Endothelial cell of umbilical vein (primary cell): ENCODE measurements at regions of chr15 and their contacts with region 1.

Region 1: DNA sequence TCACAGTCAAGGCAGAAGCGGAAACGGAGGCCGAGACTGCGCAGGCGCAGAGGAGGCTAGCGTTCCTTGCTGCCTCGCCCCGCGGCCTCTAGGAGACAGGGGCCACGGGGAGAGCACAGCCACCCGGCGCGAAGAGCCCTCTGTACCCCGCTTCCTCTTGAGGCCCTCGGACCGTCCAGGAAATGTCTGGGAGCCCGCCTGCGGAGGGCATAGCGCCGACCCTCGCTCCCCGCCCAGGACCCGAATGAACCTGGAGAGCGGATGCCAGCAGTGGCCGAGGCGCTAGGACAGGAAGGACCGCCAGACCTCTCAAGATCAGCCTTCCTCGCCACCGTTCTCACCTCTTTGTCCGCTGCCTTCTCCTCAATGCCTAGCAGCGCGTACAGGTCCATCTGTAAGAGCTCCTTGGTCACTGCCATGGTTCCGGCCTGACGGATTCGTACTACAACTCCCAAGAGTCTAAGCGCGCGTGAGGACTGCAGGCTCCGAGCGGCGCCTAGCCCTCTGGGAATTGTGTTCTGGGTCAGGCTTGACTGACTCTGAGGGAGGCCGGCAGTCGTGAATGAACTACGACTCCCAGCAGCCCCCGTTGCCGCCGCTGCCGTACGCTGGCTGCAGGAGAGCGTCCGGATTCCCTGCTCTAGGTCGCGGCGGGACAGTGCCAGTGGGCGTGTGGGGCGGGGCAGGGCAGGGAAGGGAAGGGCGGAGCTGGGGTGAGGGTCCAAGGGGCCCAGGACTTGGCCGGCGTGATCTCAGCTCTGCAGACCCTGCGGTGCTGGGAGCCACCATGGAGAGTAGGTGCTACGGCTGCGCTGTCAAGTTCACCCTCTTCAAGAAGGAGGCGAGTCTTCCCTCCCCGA is at the starts of genes DNAJC17 and ZFYVE19:
- DNase-seq: peak; percentile 98
- H3K4me3 ChIP-seq: peak within 1 kb of the TSS; percentile 64 to 67 (median 64)
- H3K27ac ChIP-seq: peak within 1 kb of the TSS; percentile 27
- H3K4me1 ChIP-seq: peaks cover 14% of the 10 kb centered on the region
- H3K27me3 ChIP-seq: no peaks in the 10 kb centered on the region
- CTCF ChIP-seq: peak in 1 of 2 donors; percentile 3
- POLR2A ChIP-seq: peak; percentile 85
- total RNA-seq, gene DNAJC17: 42.6 and 46.4 TPM in 2 replicates
- total RNA-seq, gene ZFYVE19: 24.8 and 29.7 TPM in 2 replicates

Region 2: DNA sequence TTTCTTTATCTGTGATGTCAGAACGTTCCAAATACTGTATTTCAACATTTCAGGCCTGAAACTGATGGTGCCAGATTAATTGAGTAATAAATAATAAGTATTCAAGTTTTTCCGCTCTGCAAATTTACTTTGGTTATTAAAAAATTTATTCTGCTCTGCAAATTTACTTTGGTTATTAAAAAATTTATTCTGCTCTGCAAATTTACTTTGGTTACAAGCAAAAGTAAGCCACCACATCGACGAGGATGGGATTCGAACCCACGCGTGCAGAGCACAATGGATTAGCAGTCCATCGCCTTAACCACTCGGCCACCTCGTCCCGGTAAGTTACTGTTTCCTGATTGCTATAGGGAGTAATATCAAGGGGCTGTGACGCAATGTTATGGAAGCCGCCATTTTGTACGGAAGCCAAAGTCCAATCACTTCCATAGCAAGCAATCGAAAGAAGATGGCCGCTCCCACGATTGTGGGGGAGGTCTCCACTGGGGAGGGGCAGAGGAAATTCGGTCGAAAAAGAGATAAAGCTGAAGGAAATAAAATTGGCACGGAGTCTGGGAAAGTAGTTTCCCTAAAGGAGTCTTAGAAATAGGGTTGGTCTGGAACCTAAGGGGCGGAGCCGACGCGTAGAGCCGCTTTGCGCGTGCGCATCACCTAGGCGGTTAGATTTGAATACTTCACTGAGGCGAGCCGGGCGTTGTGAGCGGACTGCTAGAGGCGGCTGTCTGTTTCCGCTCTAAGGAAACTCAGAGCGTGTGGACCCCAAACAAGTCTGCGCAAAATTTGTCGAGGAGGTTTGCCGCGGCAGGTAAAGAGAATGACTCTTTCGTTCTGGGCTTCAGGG is 213.4 kb before region 1 on chr15 and contains the start of gene KNL1:
- CTCF ChIA-PET with region 1: no interaction called
- POLR2A ChIA-PET with region 1: interaction called, 4 read pairs
- dilution Hi-C with region 1: no loop called
- intact Hi-C with region 1: loop called (anchors 10 kb)
- DNase-seq: peak; percentile 100
- H3K4me3 ChIP-seq: peak within 1 kb of the TSS; percentile 52 to 99 (median 99)
- H3K27ac ChIP-seq: peak within 1 kb of the TSS; percentile 99
- H3K4me1 ChIP-seq: peaks cover 8% of the 10 kb centered on the region
- H3K27me3 ChIP-seq: peaks cover under 1 to 3% of the 10 kb centered on the region in 2 experiments
- CTCF ChIP-seq: no peak
- POLR2A ChIP-seq: peak; percentile 83
- total RNA-seq, gene KNL1: 31.8 and 33.8 TPM in 2 replicates

Region 3: GRCh38 chr15:40694688-40695468 is 112.4 kb before region 1 on chr15 and contains the start of gene RAD51:
- CTCF ChIA-PET with region 1: no interaction called
- POLR2A ChIA-PET with region 1: interaction called, 5 read pairs
- dilution Hi-C with region 1: no loop called
- intact Hi-C with region 1: loop called (anchors 1 kb)
- DNase-seq: peak; percentile 95
- H3K4me3 ChIP-seq: peak within 1 kb of the TSS; percentile 69 to 96 (median 92)
- H3K27ac ChIP-seq: peak within 1 kb of the TSS; percentile 86
- H3K4me1 ChIP-seq: peaks cover 13% of the 10 kb centered on the region
- H3K27me3 ChIP-seq: no peaks in the 10 kb centered on the region
- CTCF ChIP-seq: no peak
- POLR2A ChIP-seq: peak; percentile 63
- total RNA-seq, gene RAD51: 29.7 and 30.9 TPM in 2 replicates

Region 4: GRCh38 chr15:40754883-40755811 is 52.1 kb before region 1 on chr15 and contains the start of gene RMDN3:
- CTCF ChIA-PET with region 1: no interaction called
- POLR2A ChIA-PET with region 1: no interaction called
- dilution Hi-C with region 1: no loop called
- intact Hi-C with region 1: loop called (anchors 1 kb)
- DNase-seq: peak; percentile 94
- H3K4me3 ChIP-seq: peak within 1 kb of the TSS; percentile 70 to 82 (median 71)
- H3K27ac ChIP-seq: peak within 1 kb of the TSS; percentile 71
- H3K4me1 ChIP-seq: peaks cover 8% of the 10 kb centered on the region
- H3K27me3 ChIP-seq: no peaks in the 10 kb centered on the region
- CTCF ChIP-seq: no peak
- POLR2A ChIP-seq: peak; percentile 81
- total RNA-seq, gene RMDN3: 35.9 and 37.2 TPM in 2 replicates

Region 5: GRCh38 chr15:40769274-40770146 is 37.7 kb before region 1 on chr15 and contains the start of gene C15orf62:
- CTCF ChIA-PET with region 1: interaction called, 3 read pairs
- POLR2A ChIA-PET with region 1: no interaction called
- dilution Hi-C with region 1: no loop called
- intact Hi-C with region 1: loop called (anchors 1 kb)
- DNase-seq: peak; percentile 65
- H3K4me3 ChIP-seq: no peak within 1 kb of the TSS
- H3K27ac ChIP-seq: peak within 1 kb of the TSS; percentile 46
- H3K4me1 ChIP-seq: peaks cover 29% of the 10 kb centered on the region
- H3K27me3 ChIP-seq: no peaks in the 10 kb centered on the region
- CTCF ChIP-seq: no peak
- POLR2A ChIP-seq: no peak
- total RNA-seq, gene C15orf62: 0.38 and 0.44 TPM in 2 replicates

Region 6: GRCh38 chr15:40793216-40793989 is 13.9 kb before region 1 on chr15:
- CTCF ChIA-PET with region 1: interaction called, 5 read pairs
- POLR2A ChIA-PET with region 1: no interaction called
- dilution Hi-C with region 1: no loop called
- intact Hi-C with region 1: loop called (anchors 1 kb)
- DNase-seq: peak; percentile 99
- H3K4me3 ChIP-seq: no peak overlapping the region
- H3K27ac ChIP-seq: peak overlapping the region; percentile 58
- H3K4me1 ChIP-seq: peaks cover 48% of the 10 kb centered on the region
- H3K27me3 ChIP-seq: no peaks in the 10 kb centered on the region
- CTCF ChIP-seq: no peak
- POLR2A ChIP-seq: no peak

Region 7: DNA sequence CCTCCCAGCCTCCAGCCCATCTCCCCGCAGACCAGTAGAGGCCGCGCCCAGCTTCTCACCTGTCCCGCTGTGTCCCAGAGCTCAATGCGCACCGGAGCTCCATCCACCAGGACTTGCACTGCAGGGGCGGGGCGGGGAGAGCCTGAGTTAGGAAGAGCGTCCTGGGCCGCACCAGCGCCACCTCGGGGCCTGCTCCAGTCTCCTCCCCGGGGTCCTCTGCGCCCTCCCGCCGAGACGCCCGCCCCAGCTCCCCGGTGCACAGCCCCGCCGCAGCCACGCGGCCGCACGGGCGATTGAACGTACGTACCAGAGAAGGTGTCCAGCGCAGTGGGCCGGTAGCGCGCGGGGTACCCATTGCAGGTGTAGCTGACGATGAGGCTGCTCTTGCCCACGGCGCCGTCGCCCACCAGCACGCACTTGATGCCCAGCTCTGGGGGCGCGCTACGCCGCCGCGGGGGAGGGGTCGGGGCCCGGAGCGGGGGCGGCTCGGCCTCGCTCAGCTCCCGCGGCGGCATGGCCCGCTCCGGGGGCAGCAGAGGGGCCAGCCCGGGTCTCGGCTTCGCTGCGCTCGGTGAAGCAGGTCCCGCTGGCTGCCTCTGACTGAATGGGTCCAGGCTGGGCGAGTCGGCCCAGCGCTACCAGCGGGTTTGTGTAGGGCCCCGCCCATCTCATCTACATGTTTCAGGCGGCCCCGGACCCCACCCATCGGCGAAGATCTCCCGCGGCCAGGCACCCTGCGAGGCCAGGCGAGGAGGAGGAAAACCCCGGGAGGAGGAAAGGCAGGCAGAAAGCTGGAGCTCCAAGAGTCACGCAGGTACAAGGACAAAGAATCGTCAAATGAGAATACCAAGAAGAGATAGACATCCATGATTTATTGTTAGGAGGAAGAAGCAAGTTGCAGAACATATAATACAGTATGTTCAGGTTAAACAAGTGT is 66.6 kb after region 1 on chr15 and contains the start of gene RHOV:
- CTCF ChIA-PET with region 1: no interaction called
- POLR2A ChIA-PET with region 1: no interaction called
- dilution Hi-C with region 1: no loop called
- intact Hi-C with region 1: no loop called
- DNase-seq: peak; percentile 43
- H3K4me3 ChIP-seq: peak within 1 kb of the TSS; percentile 9 to 43 (median 25)
- H3K27ac ChIP-seq: no peak within 1 kb of the TSS
- H3K4me1 ChIP-seq: no peaks in the 10 kb centered on the region
- H3K27me3 ChIP-seq: no peaks in the 10 kb centered on the region
- CTCF ChIP-seq: peak; percentile 33 to 55
- POLR2A ChIP-seq: no peak
- total RNA-seq, gene RHOV: 0.18 and 0.20 TPM in 2 replicates